ENCODE measurements at regions of chr6 and their contacts with region 1.

Region 1: DNA sequence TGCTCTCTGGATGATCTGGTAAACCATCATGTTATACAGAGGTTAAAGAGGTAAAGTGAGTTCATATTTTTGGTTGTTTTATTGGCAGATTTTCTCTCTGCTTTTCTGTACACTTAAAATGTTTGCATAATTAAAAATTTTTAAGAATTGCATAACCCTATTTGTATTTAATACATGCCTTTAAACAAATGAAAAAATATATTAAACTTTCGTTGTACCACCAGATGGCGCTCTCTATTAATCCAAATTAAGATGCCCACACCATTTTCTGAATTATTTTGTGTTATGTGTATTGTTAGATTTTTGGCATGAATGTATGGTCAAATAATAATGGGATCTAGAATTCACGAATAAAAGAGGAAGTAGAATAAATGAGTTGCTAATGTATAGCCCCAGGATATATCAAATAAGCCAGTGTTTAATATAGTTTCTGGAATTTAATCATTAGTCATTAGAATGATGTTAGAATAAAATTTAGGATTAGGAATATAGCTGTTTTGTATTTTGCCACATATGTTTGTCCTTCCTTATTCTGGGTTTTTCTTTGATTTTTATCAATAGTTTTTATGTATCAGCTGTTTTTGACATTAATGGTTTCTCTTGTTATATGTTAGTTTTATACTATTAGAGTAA is 38.9 kb downstream of the SMAP1 start:
- DNase-seq: no peak
- H3K4me3 ChIP-seq: no peak overlapping the region
- H3K27ac ChIP-seq: no peak overlapping the region
- H3K4me1 ChIP-seq: peaks cover 0 to 58% (median 3%) of the 10 kb centered on the region in 3 donors
- H3K27me3 ChIP-seq: no peaks in the 10 kb centered on the region
- CTCF ChIP-seq: peak; percentile 54 to 74 (median 65)
- POLR2A ChIP-seq: no peak

Region 2: DNA sequence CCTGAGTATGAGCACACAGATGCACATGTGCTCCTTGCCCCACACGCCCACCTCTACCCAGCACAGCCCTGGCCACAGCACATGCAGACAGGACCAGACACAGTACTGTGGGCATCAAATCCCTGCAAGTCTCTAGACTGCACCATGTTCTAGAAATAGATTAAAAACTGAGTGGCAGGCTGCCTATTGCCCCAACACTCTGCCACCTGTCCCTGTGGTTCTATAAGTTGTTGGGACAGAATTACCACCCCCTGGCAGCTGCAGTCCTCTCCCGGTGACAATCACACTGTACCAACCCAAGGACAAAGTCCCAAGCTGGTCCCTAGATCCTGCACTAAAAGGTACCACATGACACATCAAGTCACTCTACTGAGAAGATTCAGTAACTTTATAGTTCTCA is 180.1 kb after region 1 on chr6:
- intact Hi-C with region 1: loop called (anchors 5 kb)
- DNase-seq: no peak
- H3K4me3 ChIP-seq: no peak overlapping the region
- H3K27ac ChIP-seq: no peak overlapping the region
- H3K4me1 ChIP-seq: no peaks in the 10 kb centered on the region
- H3K27me3 ChIP-seq: no peaks in the 10 kb centered on the region
- CTCF ChIP-seq: no peak
- POLR2A ChIP-seq: no peak

Region 3: GRCh38 chr6:70955441-70956190 is 249.0 kb after region 1 on chr6:
- intact Hi-C with region 1: loop called (anchors 10 kb)
- DNase-seq: peak; percentile 21
- H3K4me3 ChIP-seq: peak overlapping the region; percentile 29 to 67 (median 49)
- H3K27ac ChIP-seq: no peak overlapping the region
- H3K4me1 ChIP-seq: peaks cover 15 to 27% (median 18%) of the 10 kb centered on the region in 3 donors
- H3K27me3 ChIP-seq: peaks cover 0 to 92% (median 7%) of the 10 kb centered on the region in 4 donors
- CTCF ChIP-seq: peak; percentile 72 to 91 (median 82)
- POLR2A ChIP-seq: no peak